GM12878 (cell line): ENCODE measurements at regions of chr7 and their contacts with region 1.

Region 1: GRCh38 chr7:46352004-46352954 is 431.2 kb upstream of the IGFBP3 start:
- DNase-seq: peak; percentile 35
- ATAC-seq: peak; percentile 82
- H3K4me3 ChIP-seq: no peak overlapping the region
- H3K27ac ChIP-seq: no peak overlapping the region
- H3K4me1 ChIP-seq: no peaks in the 10 kb centered on the region
- H3K27me3 ChIP-seq: no peaks in the 10 kb centered on the region
- CTCF ChIP-seq: peak; percentile 51 to 88 (median 62)
- EP300 ChIP-seq: no peak
- POLR2A ChIP-seq: no peak
- RAD21 ChIP-seq: peak; percentile 93

Region 2: GRCh38 chr7:45663167-45663921 is 688.9 kb before region 1 on chr7:
- CTCF ChIA-PET with region 1: no interaction called
- POLR2A ChIA-PET with region 1: no interaction called
- RAD21 ChIA-PET with region 1: no interaction called
- SMC1A ChIA-PET with region 1: no interaction called
- in situ Hi-C with region 1: no loop called
- intact Hi-C with region 1: no loop called
- DNase-seq: no peak
- ATAC-seq: peak; percentile 88
- H3K4me3 ChIP-seq: no peak overlapping the region
- H3K27ac ChIP-seq: no peak overlapping the region
- H3K4me1 ChIP-seq: no peaks in the 10 kb centered on the region
- H3K27me3 ChIP-seq: no peaks in the 10 kb centered on the region
- CTCF ChIP-seq: peak; percentile 43 to 74 (median 63)
- EP300 ChIP-seq: no peak
- POLR2A ChIP-seq: no peak
- RAD21 ChIP-seq: peak; percentile 52

Region 3: DNA sequence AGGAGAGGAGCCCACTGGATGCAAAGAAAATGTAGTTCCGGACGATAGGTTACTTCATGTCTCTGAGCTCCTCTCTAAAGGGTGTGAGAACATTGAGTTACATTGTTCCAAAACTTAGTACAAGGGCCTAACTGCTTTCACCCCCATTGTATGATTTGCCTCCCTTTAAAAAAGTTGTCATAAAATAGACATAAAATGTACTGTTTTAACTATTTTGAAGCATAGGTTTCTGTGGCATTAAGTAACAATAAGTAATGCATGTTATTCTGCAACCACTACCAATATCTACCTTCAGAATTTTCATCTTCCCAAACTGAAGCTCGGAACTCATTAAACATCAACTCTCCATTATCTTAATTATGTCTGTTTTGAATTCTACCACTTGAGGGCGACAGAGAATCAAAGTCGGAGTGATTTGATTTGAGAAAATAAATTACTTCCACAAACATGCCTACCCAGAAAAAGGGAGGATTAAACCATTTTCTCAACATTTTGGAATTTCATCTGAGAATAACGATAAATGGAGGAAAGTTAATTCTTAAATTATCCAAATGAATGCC is 461.3 kb before region 1 on chr7:
- CTCF ChIA-PET with region 1: interaction called, 4 read pairs
- POLR2A ChIA-PET with region 1: no interaction called
- RAD21 ChIA-PET with region 1: interaction called, 4 read pairs
- SMC1A ChIA-PET with region 1: interaction called, 3 read pairs
- in situ Hi-C with region 1: no loop called
- intact Hi-C with region 1: loop called (anchors 1 kb)
- DNase-seq: no peak
- ATAC-seq: peak; percentile 31; the same call in 1 of the 3 replicates
- H3K4me3 ChIP-seq: no peak overlapping the region
- H3K27ac ChIP-seq: no peak overlapping the region
- H3K4me1 ChIP-seq: no peaks in the 10 kb centered on the region
- H3K27me3 ChIP-seq: peaks cover 0 to 14% of the 10 kb centered on the region in 2 experiments
- CTCF ChIP-seq: peak; percentile 23 to 62 (median 51); a peak in 5 of 6 replicates
- EP300 ChIP-seq: no peak
- POLR2A ChIP-seq: no peak
- RAD21 ChIP-seq: peak; percentile 65

Region 4: DNA sequence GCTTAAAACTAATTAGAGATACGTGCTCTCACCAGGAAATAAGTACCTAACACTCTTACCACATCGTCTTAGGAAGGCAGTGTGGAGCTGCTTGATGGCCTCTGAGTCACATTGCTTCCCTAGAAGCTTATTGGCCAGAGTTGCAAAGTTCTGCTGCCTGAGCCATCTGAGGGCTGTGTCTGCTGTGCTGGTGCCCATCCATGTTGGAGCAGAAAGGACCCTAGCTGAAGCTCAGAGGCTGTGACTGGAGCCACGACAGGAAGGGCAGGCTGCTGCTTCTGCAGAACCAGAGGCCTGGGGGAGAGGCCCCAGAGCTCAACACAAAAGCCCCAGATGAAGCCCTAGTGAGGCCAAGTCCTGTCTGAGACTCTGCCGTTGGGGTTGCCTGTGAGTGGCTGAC is 366.4 kb before region 1 on chr7:
- CTCF ChIA-PET with region 1: interaction called, 5 read pairs
- POLR2A ChIA-PET with region 1: no interaction called
- RAD21 ChIA-PET with region 1: interaction called, 10 read pairs
- SMC1A ChIA-PET with region 1: interaction called, 8 read pairs
- in situ Hi-C with region 1: no loop called
- intact Hi-C with region 1: no loop called
- DNase-seq: no peak
- ATAC-seq: no peak
- H3K4me3 ChIP-seq: no peak overlapping the region
- H3K27ac ChIP-seq: no peak overlapping the region
- H3K4me1 ChIP-seq: no peaks in the 10 kb centered on the region
- H3K27me3 ChIP-seq: no peaks in the 10 kb centered on the region
- CTCF ChIP-seq: no peak
- EP300 ChIP-seq: no peak
- POLR2A ChIP-seq: no peak
- RAD21 ChIP-seq: no peak

Region 5: GRCh38 chr7:46139079-46139478 is 213.2 kb before region 1 on chr7:
- CTCF ChIA-PET with region 1: no interaction called
- POLR2A ChIA-PET with region 1: no interaction called
- RAD21 ChIA-PET with region 1: interaction called, 10 read pairs
- SMC1A ChIA-PET with region 1: interaction called, 8 read pairs
- in situ Hi-C with region 1: no loop called
- intact Hi-C with region 1: no loop called
- DNase-seq: peak; percentile 48
- ATAC-seq: peak; percentile 95
- H3K4me3 ChIP-seq: no peak overlapping the region
- H3K27ac ChIP-seq: no peak overlapping the region
- H3K4me1 ChIP-seq: no peaks in the 10 kb centered on the region
- H3K27me3 ChIP-seq: no peaks in the 10 kb centered on the region
- CTCF ChIP-seq: no peak
- EP300 ChIP-seq: peak; percentile 76 to 91
- POLR2A ChIP-seq: no peak
- RAD21 ChIP-seq: no peak

Region 6: GRCh38 chr7:46291064-46291463 is 61.2 kb before region 1 on chr7:
- CTCF ChIA-PET with region 1: interaction called, 4 read pairs
- POLR2A ChIA-PET with region 1: no interaction called
- RAD21 ChIA-PET with region 1: interaction called, 7 read pairs
- SMC1A ChIA-PET with region 1: interaction called, 8 read pairs
- in situ Hi-C with region 1: no loop called
- intact Hi-C with region 1: loop called (anchors 2 kb)
- DNase-seq: peak; percentile 47
- ATAC-seq: peak; percentile 94
- H3K4me3 ChIP-seq: no peak overlapping the region
- H3K27ac ChIP-seq: peak overlapping the region; percentile 19; the same call in 1 of the 2 replicates
- H3K4me1 ChIP-seq: no peaks in the 10 kb centered on the region
- H3K27me3 ChIP-seq: no peaks in the 10 kb centered on the region
- CTCF ChIP-seq: no peak
- EP300 ChIP-seq: no peak
- POLR2A ChIP-seq: no peak
- RAD21 ChIP-seq: no peak